Activated CD8-positive, alpha-beta T cell treated with anti-CD3 and anti-CD28 coated beads for 36 hours (primary cell): ENCODE measurements at regions of chr19 and their contacts with region 1.

Region 1: DNA sequence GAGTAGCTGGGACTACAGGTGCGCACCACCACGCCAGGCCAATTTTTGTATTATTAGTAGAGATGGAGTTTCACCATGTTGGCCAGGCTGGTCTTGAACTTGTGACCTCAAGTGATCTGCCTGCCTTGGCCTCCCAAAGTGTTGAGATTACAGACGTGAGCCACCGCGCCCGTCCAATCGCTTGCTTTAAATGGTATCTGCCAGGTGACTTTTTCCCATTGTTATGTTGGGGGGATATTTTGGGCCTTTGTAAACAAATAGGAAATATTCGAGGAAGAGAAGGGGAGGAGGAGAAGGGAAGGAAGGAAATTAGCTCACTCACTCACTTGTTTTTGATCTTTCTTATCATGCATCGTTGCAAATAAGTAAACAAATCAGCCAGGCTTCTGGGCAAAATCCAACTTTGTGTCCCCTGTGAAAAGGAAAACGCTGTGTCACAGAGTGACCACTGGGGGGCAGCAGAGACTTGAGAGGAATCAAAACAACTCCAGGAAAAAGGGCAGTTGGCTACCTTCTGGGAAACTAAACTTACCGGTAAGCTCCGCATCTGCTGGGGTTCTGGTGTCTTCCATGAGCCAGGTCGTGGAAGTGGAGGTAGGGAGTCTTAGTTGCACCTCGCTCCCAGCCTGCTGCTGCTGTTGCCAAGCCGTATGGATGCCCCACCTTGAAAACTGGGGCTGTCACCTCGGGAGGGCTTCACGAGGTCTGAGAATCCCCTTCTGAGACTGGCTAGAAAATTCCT is 9.3 kb upstream of the RANBP3 start:
- DNase-seq: peak; percentile 80
- ATAC-seq: peak; percentile 57
- H3K4me3 Mint-ChIP-seq: peak overlapping the region; percentile 54
- H3K27ac Mint-ChIP-seq: peak overlapping the region; percentile 67
- H3K4me1 Mint-ChIP-seq: peaks cover 35% of the 10 kb centered on the region
- H3K27me3 Mint-ChIP-seq: peaks cover 3% of the 10 kb centered on the region
- CTCF ChIP-seq: peak; percentile 95

Region 2: GRCh38 chr19:5947435-5947834 is 39.8 kb before region 1 on chr19:
- CTCF ChIA-PET with region 1: interaction called, 13 read pairs
- POLR2A ChIA-PET with region 1: no interaction called
- intact Hi-C with region 1: no loop called
- DNase-seq: no peak
- ATAC-seq: no peak
- H3K4me3 Mint-ChIP-seq: no peak overlapping the region
- H3K27ac Mint-ChIP-seq: peak overlapping the region; percentile 75
- H3K4me1 Mint-ChIP-seq: peaks cover 87% of the 10 kb centered on the region
- H3K27me3 Mint-ChIP-seq: no peaks in the 10 kb centered on the region
- CTCF ChIP-seq: no peak

Region 3: GRCh38 chr19:6005321-6006069 is 18.2 kb after region 1 on chr19:
- CTCF ChIA-PET with region 1: interaction called, 14 read pairs
- POLR2A ChIA-PET with region 1: no interaction called
- intact Hi-C with region 1: no loop called
- DNase-seq: no peak
- ATAC-seq: no peak
- H3K4me3 Mint-ChIP-seq: no peak overlapping the region
- H3K27ac Mint-ChIP-seq: no peak overlapping the region
- H3K4me1 Mint-ChIP-seq: no peaks in the 10 kb centered on the region
- H3K27me3 Mint-ChIP-seq: no peaks in the 10 kb centered on the region
- CTCF ChIP-seq: no peak